Caco-2 (cell line): ENCODE measurements at regions of chr3 and their contacts with region 1.

Region 1: GRCh38 chr3:98563661-98564281 is 29.6 kb downstream of the CPOX start:
- DNase-seq: no peak
- H3K4me3 ChIP-seq: no peak overlapping the region
- H3K4me3 Mint-ChIP-seq: no peak overlapping the region
- H3K27ac Mint-ChIP-seq: no peak overlapping the region
- H3K4me1 ChIP-seq: no peaks in the 10 kb centered on the region
- H3K4me1 Mint-ChIP-seq: no peaks in the 10 kb centered on the region
- H3K27me3 ChIP-seq: no peaks in the 10 kb centered on the region
- H3K27me3 Mint-ChIP-seq: no peaks in the 10 kb centered on the region
- CTCF ChIP-seq: no peak

Region 2: DNA sequence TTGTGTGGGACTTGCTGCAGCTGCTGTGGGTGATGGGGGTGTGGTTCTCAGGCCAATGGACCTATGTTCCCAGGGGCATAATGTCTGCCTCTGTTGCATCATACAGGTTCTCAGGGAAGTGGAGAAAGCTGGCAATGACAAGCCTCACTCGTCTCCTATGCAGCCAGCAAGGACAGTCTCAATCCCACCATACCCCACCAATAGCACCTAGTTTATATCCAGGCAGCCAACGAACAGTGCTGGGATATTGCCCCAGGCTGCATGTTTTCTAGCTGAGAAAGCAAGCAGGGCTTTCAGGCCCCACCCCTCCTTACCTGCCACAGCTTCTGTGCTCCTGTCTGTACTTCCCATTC is 80.7 kb before region 1 on chr3:
- CTCF ChIA-PET with region 1: no interaction called
- POLR2A ChIA-PET with region 1: no interaction called
- intact Hi-C with region 1: no loop called
- DNase-seq: no peak
- H3K4me3 ChIP-seq: no peak overlapping the region
- H3K4me3 Mint-ChIP-seq: no peak overlapping the region
- H3K27ac Mint-ChIP-seq: peak overlapping the region; percentile 37
- H3K4me1 ChIP-seq: no peaks in the 10 kb centered on the region
- H3K4me1 Mint-ChIP-seq: peaks cover 6% of the 10 kb centered on the region
- H3K27me3 ChIP-seq: no peaks in the 10 kb centered on the region
- H3K27me3 Mint-ChIP-seq: peaks cover 3% of the 10 kb centered on the region
- CTCF ChIP-seq: no peak

Region 3: GRCh38 chr3:98741121-98741716 is 177.4 kb after region 1 on chr3:
- CTCF ChIA-PET with region 1: interaction called, 10 read pairs
- POLR2A ChIA-PET with region 1: no interaction called
- intact Hi-C with region 1: no loop called
- DNase-seq: peak; percentile 48 to 51
- H3K4me3 ChIP-seq: no peak overlapping the region
- H3K4me3 Mint-ChIP-seq: peak overlapping the region; percentile 63
- H3K27ac Mint-ChIP-seq: peak overlapping the region; percentile 90
- H3K4me1 ChIP-seq: peaks cover 65% of the 10 kb centered on the region
- H3K4me1 Mint-ChIP-seq: peaks cover 77% of the 10 kb centered on the region
- H3K27me3 ChIP-seq: no peaks in the 10 kb centered on the region
- H3K27me3 Mint-ChIP-seq: no peaks in the 10 kb centered on the region
- CTCF ChIP-seq: no peak

Region 4: GRCh38 chr3:98893740-98894139 is 330.0 kb after region 1 on chr3:
- CTCF ChIA-PET with region 1: no interaction called
- POLR2A ChIA-PET with region 1: interaction called, 10 read pairs
- intact Hi-C with region 1: no loop called
- DNase-seq: no peak
- H3K4me3 ChIP-seq: no peak overlapping the region
- H3K4me3 Mint-ChIP-seq: no peak overlapping the region
- H3K27ac Mint-ChIP-seq: no peak overlapping the region
- H3K4me1 ChIP-seq: peaks cover 22% of the 10 kb centered on the region
- H3K4me1 Mint-ChIP-seq: peaks cover 14% of the 10 kb centered on the region
- H3K27me3 ChIP-seq: no peaks in the 10 kb centered on the region
- H3K27me3 Mint-ChIP-seq: no peaks in the 10 kb centered on the region
- CTCF ChIP-seq: no peak